ENCODE measurements at regions of chr20 and their contacts with region 1.

Region 1: DNA sequence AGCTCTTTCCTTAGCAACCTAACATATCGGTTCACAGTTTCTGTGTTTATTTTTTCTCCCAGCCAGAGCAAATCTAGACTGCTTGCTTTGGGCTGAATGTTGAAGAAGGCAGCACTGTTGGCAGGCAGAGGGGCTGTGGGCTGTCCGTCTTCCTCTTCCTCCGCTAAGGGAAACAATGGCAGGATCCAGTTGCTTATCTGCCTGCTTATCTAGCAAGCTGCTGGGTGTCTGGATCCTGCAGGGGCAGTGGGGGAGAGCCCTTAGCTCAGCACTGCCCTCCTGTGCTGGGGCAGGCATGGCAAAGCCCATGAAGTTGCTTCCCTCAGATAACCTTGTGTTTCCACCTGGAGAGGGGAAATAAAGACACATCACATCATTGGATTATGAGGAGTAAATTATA is 92.7 kb upstream of the CD93 start:
- DNase-seq: no peak
- H3K4me3 ChIP-seq: no peak overlapping the region
- H3K27ac ChIP-seq: no peak overlapping the region
- H3K4me1 ChIP-seq: no peaks in the 10 kb centered on the region
- H3K27me3 ChIP-seq: no peaks in the 10 kb centered on the region
- CTCF ChIP-seq: peak; percentile 21 to 32 (median 22)
- EP300 ChIP-seq: no peak
- POLR2A ChIP-seq: no peak
- RAD21 ChIP-seq: peak in 1 of 2 experiments; percentile 31; a peak in 3 of 4 replicates

Region 2: DNA sequence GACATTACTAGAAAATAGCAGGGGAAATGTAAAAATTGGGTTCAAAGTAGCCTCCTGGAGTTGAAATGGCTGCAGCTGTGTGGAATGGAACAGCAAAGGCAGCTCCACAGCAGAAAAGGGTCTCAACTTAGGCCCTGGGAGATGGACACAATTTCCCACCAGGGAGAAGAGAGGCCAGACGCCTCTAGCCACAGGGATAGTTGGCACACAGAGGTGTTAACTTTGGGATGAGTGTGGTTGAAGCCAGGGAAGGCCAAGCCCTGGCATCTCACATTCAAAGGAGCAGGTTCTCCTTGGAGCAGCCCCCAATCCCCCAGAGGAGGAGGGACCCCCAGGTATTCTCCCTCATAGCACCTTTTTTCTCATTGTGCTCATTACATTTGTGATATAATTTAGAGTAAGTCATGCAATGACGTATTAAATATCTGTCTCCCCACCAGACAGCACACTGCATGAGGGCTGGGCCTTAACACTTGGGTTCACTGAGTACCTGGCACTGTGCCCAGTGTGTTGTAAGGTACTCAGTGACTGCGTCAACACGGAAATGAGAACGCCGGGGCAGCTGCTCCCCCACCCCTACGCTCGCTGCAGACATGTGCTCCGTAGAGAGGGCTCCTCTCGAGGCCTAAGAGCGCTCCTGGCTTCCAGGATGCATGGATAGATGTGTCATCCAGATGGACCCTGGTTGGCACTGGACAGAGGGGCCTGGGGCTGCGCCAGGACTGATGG is 16.7 kb before region 1 on chr20:
- CTCF ChIA-PET with region 1: interaction called, 31 read pairs
- POLR2A ChIA-PET with region 1: no interaction called
- DNase-seq: peak in 1 of 2 experiments; percentile 16
- H3K4me3 ChIP-seq: no peak overlapping the region
- H3K27ac ChIP-seq: no peak overlapping the region
- H3K4me1 ChIP-seq: peaks cover 2 to 7% (median 3%) of the 10 kb centered on the region in 4 experiments; a peak in 4 of 7 replicates
- H3K27me3 ChIP-seq: no peaks in the 10 kb centered on the region
- CTCF ChIP-seq: no peak
- EP300 ChIP-seq: no peak
- POLR2A ChIP-seq: no peak
- RAD21 ChIP-seq: no peak